Cardiac septum (tissue), 1 donor: ENCODE measurements at regions of chr10 and their contacts with region 1.

Region 1: DNA sequence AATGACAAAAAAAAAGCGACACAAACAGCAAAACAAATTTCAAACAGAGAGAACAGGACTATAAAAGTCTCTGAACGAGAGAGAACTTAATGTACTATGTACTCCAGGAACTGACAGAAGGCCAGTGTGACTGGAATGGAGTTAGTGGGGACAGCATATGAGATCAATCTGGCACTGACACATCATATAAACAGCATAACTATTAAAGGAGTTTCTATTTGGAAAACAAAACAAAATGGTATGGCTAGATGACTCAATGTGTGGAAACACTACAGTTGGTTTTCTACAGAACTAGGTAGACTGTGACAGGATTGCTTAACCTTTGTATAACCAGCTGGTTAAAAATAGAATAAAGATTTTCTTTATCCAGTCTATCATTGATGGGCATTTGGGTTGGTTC is 232.9 kb upstream of the KAT6B start:
- DNase-seq: no peak

Region 2: GRCh38 chr10:74718208-74718607 is 124.7 kb after region 1 on chr10:
- intact Hi-C with region 1: no loop called
- DNase-seq: no peak

Region 3: DNA sequence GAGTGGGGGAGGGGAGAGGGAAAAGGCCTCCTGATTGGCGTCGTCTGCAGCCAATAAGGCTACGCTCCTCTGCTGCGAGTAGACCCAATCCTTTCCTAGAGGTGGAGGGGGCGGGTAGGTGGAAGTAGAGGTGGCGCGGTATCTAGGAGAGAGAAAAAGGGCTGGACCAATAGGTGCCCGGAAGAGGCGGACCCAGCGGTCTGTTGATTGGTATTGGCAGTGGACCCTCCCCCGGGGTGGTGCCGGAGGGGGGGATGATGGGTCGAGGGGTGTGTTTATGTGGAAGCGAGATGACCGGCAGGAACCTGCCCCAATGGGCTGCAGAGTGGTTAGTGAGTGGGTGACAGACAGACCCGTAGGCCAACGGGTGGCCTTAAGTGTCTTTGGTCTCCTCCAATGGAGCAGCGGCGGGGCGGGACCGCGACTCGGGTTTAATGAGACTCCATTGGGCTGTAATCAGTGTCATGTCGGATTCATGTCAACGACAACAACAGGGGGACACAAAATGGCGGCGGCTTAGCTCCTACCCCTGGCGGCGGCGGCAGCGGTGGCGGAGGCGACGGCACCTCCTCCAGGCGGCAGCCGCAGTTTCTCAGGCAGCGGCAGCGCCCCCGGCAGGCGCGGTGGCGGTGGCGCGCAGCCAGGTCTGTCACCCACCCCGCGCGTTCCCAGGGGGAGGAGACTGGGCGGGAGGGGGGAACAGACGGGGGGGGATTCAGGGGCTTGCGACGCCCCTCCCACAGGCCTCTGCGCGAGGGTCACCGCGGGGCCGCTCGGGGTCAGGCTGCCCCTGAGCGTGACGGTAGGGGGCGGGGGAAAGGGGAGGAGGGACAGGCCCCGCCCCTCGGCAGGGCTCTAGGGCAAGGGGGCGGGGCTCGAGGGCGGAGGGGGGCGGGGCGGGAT is 232.9 kb after region 1 on chr10 and contains the start of gene KAT6B:
- intact Hi-C with region 1: loop called (anchors 5 kb)
- DNase-seq: peak; percentile 100
- total RNA-seq, gene KAT6B: 47.5 TPM